ENCODE measurements at regions of chr18 and their contacts with region 1.

Region 1: GRCh38 chr18:26813043-26813442 is 52.5 kb downstream of the AQP4 start:
- DNase-seq: peak; percentile 44
- ATAC-seq: peak; percentile 86
- H3K4me3 ChIP-seq: no peak overlapping the region
- H3K27ac ChIP-seq: no peak overlapping the region
- H3K4me1 ChIP-seq: no peaks in the 10 kb centered on the region
- H3K27me3 ChIP-seq: no peaks in the 10 kb centered on the region
- CTCF ChIP-seq: peak; percentile 44 to 67 (median 49); a peak in 4 of 6 replicates
- POLR2A ChIP-seq: no peak
- RAD21 ChIP-seq: peak; percentile 70

Region 2: GRCh38 chr18:26853401-26853800 is 40.4 kb after region 1 on chr18:
- CTCF ChIA-PET with region 1: no interaction called
- POLR2A ChIA-PET with region 1: no interaction called
- RAD21 ChIA-PET with region 1: no interaction called
- intact Hi-C with region 1: no loop called
- DNase-seq: no peak
- ATAC-seq: no peak
- H3K4me3 ChIP-seq: no peak overlapping the region
- H3K27ac ChIP-seq: no peak overlapping the region
- H3K4me1 ChIP-seq: no peaks in the 10 kb centered on the region
- H3K27me3 ChIP-seq: peaks cover 6% of the 10 kb centered on the region; the same call in 1 of the 2 replicates
- CTCF ChIP-seq: no peak
- POLR2A ChIP-seq: no peak
- RAD21 ChIP-seq: no peak

Region 3: DNA sequence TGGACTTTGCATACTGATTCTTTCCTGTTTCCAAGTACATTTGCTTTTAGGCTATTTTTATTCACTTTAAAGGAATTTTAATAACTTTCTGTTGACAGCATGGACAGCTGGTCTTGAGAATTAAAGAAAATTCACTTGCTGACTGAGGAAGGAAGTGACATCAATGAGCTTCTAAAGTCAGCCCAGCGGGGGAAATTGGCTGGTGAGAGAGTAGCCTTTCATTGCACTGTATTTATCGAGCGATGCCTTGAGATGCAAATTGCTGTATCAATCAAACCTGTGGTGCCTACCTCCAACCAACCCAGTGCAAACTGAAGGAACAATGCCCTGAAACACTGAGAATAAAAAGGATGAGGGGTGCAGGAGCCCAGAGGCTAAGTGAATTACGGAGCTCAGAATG is 143.8 kb after region 1 on chr18:
- CTCF ChIA-PET with region 1: no interaction called
- POLR2A ChIA-PET with region 1: no interaction called
- RAD21 ChIA-PET with region 1: no interaction called
- intact Hi-C with region 1: loop called (anchors 5 kb)
- DNase-seq: no peak
- ATAC-seq: no peak
- H3K4me3 ChIP-seq: no peak overlapping the region
- H3K27ac ChIP-seq: no peak overlapping the region
- H3K4me1 ChIP-seq: no peaks in the 10 kb centered on the region
- H3K27me3 ChIP-seq: no peaks in the 10 kb centered on the region; the same call in 1 of the 2 replicates
- CTCF ChIP-seq: no peak
- POLR2A ChIP-seq: no peak
- RAD21 ChIP-seq: no peak